ENCODE measurements at regions of chr7 and their contacts with region 1.

Region 1: DNA sequence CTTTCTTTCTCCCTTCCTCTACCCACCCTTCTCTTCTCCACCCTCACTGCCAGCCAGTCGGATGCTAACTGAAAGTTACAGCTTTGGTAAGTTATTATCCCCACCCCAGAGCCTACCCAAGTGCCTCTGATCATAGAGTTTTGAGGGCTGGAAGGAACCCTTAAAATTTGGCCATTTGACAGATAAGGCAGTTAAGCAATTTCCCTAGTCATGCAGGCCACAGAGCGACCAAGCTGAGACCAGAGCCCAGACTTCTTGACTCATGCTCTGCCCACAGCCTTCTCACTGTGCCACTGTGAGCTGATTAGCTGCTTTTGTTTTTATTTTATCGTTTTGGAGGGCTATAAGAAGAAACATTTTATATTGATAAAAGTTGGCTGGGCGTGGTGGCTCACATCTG is 17.2 kb downstream of the SAP25 start:
- DNase-seq: no peak
- H3K4me3 ChIP-seq: no peak overlapping the region
- H3K27ac ChIP-seq: peak overlapping the region in 1 of 2 donors; percentile 19
- H3K4me1 ChIP-seq: no peaks in the 10 kb centered on the region
- H3K27me3 ChIP-seq: no peaks in the 10 kb centered on the region
- CTCF ChIP-seq: no peak
- POLR2A ChIP-seq: no peak

Region 2: GRCh38 chr7:100465702-100466311 is 90.7 kb before region 1 on chr7:
- intact Hi-C with region 1: no loop called
- DNase-seq: peak; percentile 89
- H3K4me3 ChIP-seq: no peak overlapping the region
- H3K27ac ChIP-seq: peak overlapping the region; percentile 63 to 80
- H3K4me1 ChIP-seq: peaks cover 24% of the 10 kb centered on the region
- H3K27me3 ChIP-seq: no peaks in the 10 kb centered on the region
- CTCF ChIP-seq: peak; percentile 54 to 59 (median 56)
- POLR2A ChIP-seq: no peak

Region 3: DNA sequence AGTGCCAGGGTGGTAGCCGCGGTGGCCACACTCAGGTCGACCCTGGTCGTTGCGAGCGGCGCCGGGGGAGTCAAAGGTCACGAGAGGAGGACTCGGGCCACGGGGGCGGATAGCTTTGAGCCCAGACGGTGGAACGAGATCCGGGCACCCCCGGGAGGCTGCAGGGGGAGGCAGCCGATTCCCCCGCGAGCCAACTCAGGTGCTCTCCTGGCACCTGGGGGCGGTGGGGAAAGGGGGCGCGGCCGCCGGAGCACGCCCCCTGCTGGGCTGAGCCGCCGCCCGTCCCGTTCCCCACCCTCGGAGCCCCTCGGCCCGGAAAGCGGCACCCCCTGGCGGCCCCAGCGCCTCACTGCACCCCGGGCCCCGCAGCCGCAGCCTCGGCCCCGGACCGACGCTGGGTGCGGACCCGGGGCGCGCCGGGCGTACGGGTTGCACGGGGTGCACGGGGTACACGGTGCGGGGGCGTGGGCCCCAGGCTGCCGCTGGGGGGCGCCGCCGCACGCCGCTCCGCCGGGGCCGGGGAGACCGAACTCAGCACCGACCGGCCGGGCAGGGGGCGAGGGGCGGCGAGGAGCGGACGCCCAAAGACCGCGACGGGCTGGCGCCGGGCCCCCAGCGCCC is 73.3 kb before region 1 on chr7:
- intact Hi-C with region 1: loop called (anchors 5 kb)
- DNase-seq: peak; percentile 73
- H3K4me3 ChIP-seq: peak overlapping the region; percentile 66 to 72
- H3K27ac ChIP-seq: peak overlapping the region; percentile 78 to 85
- H3K4me1 ChIP-seq: peaks cover 36% of the 10 kb centered on the region
- H3K27me3 ChIP-seq: no peaks in the 10 kb centered on the region
- CTCF ChIP-seq: peak; percentile 96 to 99 (median 98)
- POLR2A ChIP-seq: no peak

Region 4: GRCh38 chr7:100586266-100587025 is 29.9 kb after region 1 on chr7 and contains the start of gene FBXO24:
- intact Hi-C with region 1: no loop called
- DNase-seq: peak; percentile 99
- H3K4me3 ChIP-seq: peak within 1 kb of the TSS; percentile 95 to 98
- H3K27ac ChIP-seq: peak within 1 kb of the TSS; percentile 96 to 99
- H3K4me1 ChIP-seq: peaks cover 37% of the 10 kb centered on the region
- H3K27me3 ChIP-seq: no peaks in the 10 kb centered on the region
- CTCF ChIP-seq: peak in 1 of 3 experiments; percentile 18
- POLR2A ChIP-seq: peak; percentile 42
- total RNA-seq, gene FBXO24: 37.5 to 74.5 TPM

Region 5: DNA sequence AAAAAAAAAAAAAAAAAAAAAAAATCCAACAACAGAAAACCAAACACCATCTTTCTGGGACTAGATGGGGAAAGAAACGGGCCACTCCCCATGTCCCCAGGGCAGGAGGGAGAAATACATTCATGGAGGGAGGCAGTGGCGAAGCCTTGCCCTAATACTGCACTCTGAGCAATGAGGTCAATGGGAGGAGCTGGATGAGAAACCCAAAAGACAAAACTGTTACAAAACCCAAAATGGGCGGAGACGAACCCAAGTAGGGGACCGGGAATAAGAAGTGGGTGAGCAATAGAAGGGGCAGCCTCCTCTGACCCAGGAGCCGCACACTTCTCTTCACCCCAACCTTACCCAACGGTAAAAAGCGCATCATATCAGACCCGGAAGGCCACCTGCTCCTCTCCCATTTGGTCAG is 123.6 kb after region 1 on chr7:
- intact Hi-C with region 1: no loop called
- DNase-seq: peak; percentile 61
- H3K4me3 ChIP-seq: no peak overlapping the region
- H3K27ac ChIP-seq: peak overlapping the region; percentile 25 to 50
- H3K4me1 ChIP-seq: peaks cover 26% of the 10 kb centered on the region
- H3K27me3 ChIP-seq: no peaks in the 10 kb centered on the region
- CTCF ChIP-seq: no peak
- POLR2A ChIP-seq: no peak